Endothelial cell of umbilical vein (primary cell): ENCODE measurements at regions of chr6 and their contacts with region 1.

Region 1: GRCh38 chr6:73610444-73611275 is 43.1 kb downstream of the SLC17A5 start:
- DNase-seq: peak; percentile 77
- H3K4me3 ChIP-seq: no peak overlapping the region
- H3K27ac ChIP-seq: no peak overlapping the region
- H3K4me1 ChIP-seq: no peaks in the 10 kb centered on the region
- H3K27me3 ChIP-seq: no peaks in the 10 kb centered on the region
- CTCF ChIP-seq: peak; percentile 28 to 31
- POLR2A ChIP-seq: no peak

Region 2: GRCh38 chr6:73515204-73515655 is 95.4 kb before region 1 on chr6:
- CTCF ChIA-PET with region 1: interaction called, 113 read pairs
- POLR2A ChIA-PET with region 1: interaction called, 26 read pairs
- dilution Hi-C with region 1: no loop called
- intact Hi-C with region 1: loop called (anchors 1 kb)
- DNase-seq: no peak
- H3K4me3 ChIP-seq: no peak overlapping the region
- H3K27ac ChIP-seq: peak overlapping the region; percentile 6
- H3K4me1 ChIP-seq: peaks cover 15% of the 10 kb centered on the region
- H3K27me3 ChIP-seq: no peaks in the 10 kb centered on the region
- CTCF ChIP-seq: no peak
- POLR2A ChIP-seq: no peak

Region 3: GRCh38 chr6:73520688-73521350 is 89.8 kb before region 1 on chr6 and contains the start of gene EEF1A1:
- CTCF ChIA-PET with region 1: interaction called, 113 read pairs
- POLR2A ChIA-PET with region 1: interaction called, 26 read pairs
- dilution Hi-C with region 1: no loop called
- intact Hi-C with region 1: no loop called
- DNase-seq: peak; percentile 100
- H3K4me3 ChIP-seq: peak within 1 kb of the TSS; percentile 85 to 99 (median 95)
- H3K27ac ChIP-seq: peak within 1 kb of the TSS; percentile 100
- H3K4me1 ChIP-seq: peaks cover 34% of the 10 kb centered on the region
- H3K27me3 ChIP-seq: no peaks in the 10 kb centered on the region
- CTCF ChIP-seq: no peak
- POLR2A ChIP-seq: peak; percentile 100
- total RNA-seq, gene EEF1A1: 9,186 and 9,456 TPM in 2 replicates

Region 4: DNA sequence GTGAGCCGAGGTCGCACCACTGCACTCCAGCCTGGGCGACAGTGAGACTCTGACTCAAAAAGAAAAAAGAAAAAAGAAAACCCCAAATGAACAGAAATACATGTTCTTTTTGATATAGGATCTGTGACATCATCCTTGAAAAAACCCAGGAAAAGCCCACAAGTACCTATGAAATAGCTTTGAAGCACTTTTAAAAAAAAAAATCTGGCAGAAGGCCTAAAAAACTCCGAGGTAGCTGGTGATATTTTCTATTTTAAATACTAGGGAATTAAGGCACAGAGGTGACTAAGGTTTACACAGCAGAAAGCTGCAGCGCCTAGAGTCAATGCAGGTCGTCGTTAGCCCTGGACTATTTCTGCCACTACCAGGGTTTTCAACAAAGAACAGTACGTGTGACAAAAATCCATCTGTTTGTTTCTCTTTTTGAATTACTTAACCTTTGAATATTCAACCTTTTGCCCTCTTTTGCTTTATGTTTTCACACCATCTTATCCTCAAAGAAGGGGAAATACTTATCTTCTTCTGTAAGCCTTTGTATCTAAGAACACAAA is 50.4 kb before region 1 on chr6:
- CTCF ChIA-PET with region 1: no interaction called
- POLR2A ChIA-PET with region 1: no interaction called
- dilution Hi-C with region 1: no loop called
- intact Hi-C with region 1: no loop called
- DNase-seq: peak; percentile 32
- H3K4me3 ChIP-seq: no peak overlapping the region
- H3K27ac ChIP-seq: peak overlapping the region; percentile 1
- H3K4me1 ChIP-seq: peaks cover 3% of the 10 kb centered on the region
- H3K27me3 ChIP-seq: no peaks in the 10 kb centered on the region
- CTCF ChIP-seq: no peak
- POLR2A ChIP-seq: no peak

Region 5: GRCh38 chr6:73888050-73888449 is 277.4 kb after region 1 on chr6:
- CTCF ChIA-PET with region 1: no interaction called
- POLR2A ChIA-PET with region 1: no interaction called
- dilution Hi-C with region 1: no loop called
- intact Hi-C with region 1: no loop called
- DNase-seq: no peak
- H3K4me3 ChIP-seq: no peak overlapping the region
- H3K27ac ChIP-seq: no peak overlapping the region
- H3K4me1 ChIP-seq: peaks cover 2% of the 10 kb centered on the region
- H3K27me3 ChIP-seq: no peaks in the 10 kb centered on the region
- CTCF ChIP-seq: no peak
- POLR2A ChIP-seq: no peak